BJ (cell line): ENCODE measurements at regions of chr12 and their contacts with region 1.

Region 1: GRCh38 chr12:121499929-121500793 is 80.7 kb downstream of the KDM2B start:
- DNase-seq: peak; percentile 4
- H3K4me3 ChIP-seq: no peak overlapping the region
- H3K27me3 ChIP-seq: no peaks in the 10 kb centered on the region
- CTCF ChIP-seq: peak; percentile 98

Region 2: DNA sequence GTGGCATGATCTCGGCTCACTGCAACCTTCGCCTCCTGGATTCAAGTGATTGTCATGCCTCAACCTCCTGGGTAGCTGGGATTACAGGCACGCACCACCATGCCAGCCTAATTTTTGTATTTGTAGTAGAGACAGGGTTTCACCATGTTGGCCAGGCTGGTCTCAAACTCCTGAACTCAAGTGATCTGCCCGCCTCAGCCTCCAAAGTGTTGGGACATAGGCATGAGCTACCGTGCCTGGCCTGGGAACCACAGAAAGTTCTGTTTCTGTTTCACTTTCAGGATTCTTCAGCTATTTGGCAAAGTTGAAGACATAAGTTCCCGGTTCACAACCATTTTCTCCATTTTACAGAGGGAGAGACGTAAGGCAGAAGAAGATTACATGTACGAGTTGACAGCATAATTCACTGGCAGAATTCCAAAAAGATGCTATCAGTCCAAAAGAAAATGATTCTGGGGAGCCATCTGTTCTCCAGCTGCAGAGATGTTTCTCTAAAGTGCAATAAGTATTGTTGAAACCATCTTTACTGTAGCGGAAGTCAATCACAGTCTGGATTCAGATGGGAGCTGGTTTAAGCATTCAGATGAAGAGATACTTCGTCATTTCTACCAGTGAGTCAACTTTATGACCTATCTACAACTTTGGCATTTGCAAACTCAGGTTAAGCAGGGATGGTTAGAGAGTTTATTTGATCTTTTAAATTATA is 108.4 kb before region 1 on chr12:
- CTCF ChIA-PET with region 1: no interaction called
- POLR2A ChIA-PET with region 1: no interaction called
- DNase-seq: peak; percentile 75
- H3K4me3 ChIP-seq: peak overlapping the region; percentile 20
- H3K27me3 ChIP-seq: no peaks in the 10 kb centered on the region
- CTCF ChIP-seq: no peak

Region 3: GRCh38 chr12:121678716-121679580 is 178.8 kb after region 1 on chr12:
- CTCF ChIA-PET with region 1: interaction called, 97 read pairs
- POLR2A ChIA-PET with region 1: no interaction called
- DNase-seq: no peak
- H3K4me3 ChIP-seq: no peak overlapping the region
- H3K27me3 ChIP-seq: no peaks in the 10 kb centered on the region
- CTCF ChIP-seq: no peak